ENCODE measurements at regions of chr17 and their contacts with region 1.

Region 1: DNA sequence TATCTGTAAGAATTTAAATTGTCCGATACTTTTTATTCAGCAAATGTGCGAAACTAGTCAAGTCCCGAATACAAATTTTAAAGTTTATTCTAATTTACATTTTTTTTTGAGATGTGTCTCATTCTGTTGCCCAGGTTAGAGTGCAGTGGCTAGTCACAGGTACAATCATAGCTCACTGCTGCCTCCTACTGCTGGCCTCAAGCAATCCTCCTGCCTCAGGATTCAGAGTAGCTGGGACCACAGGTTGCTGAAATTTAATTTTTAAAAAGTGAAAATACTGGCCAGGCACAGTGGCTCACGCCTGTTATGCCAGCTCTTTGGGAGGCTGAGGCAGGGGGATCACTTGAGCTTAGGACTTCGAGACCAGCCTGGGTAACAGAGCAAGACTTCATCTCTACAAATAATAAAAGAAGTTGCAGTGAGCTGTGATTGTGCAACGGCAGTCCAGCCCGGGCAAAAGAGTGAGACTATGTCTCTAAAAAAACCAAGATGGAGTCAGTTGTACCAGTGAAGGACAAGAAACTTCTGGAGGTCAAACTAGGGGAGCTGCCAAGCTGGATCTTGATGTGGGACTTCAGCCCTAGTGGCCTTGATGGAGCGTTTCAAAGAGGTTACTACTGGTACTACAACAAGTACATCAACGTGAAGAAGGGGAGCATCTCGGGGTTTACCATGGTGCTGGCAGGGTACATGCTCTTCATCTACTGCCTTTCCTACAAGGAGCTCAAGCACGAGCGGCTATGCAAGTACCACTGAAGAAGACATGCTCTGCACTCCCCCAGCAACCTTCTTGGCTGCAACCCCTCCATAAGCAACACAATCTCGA is 5.6 kb downstream of the POLG2 start:
- DNase-seq: peak in 8 of 9 experiments; percentile 27 to 71 (median 53)
- ATAC-seq: peak; percentile 76
- H3K4me3 ChIP-seq: no peak overlapping the region
- H3K4me3 Mint-ChIP-seq: no peak overlapping the region
- H3K27ac ChIP-seq: no peak overlapping the region
- H3K27ac Mint-ChIP-seq: no peak overlapping the region
- H3K4me1 ChIP-seq: peaks cover 15% of the 10 kb centered on the region
- H3K4me1 Mint-ChIP-seq: peaks cover 34% of the 10 kb centered on the region
- H3K27me3 ChIP-seq: no peaks in the 10 kb centered on the region
- H3K27me3 Mint-ChIP-seq: no peaks in the 10 kb centered on the region
- CTCF ChIP-seq: peak; percentile 74

Region 2: DNA sequence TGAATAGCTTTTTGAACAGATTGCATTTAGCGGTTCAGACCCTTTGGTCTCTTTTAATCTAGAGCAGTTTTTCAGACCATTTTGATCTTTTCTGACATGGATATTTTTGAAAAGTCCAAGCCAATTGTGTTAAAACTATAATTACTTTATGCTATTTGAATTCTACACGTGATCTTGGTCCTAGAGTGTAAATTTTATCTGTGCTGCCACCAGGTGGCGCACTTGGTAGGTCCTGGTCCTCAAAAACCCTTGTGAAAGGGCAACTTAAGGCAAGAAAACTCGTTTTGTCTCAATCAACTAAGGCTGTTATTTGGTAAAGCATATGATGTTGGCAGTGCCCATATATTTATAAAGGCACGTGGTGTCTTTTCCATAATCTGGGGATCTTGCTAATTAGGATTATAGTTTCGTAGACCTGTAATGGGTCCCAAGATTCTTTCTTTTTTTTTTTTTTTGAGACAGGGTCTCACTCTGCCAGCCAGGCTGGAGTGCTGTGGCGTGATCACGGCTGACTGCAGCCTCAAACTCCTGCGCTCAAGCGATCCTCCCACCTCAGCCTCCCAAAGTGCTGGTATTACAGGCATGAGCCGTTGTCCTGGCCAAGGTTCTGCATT is 184.3 kb before region 1 on chr17:
- CTCF ChIA-PET with region 1: no interaction called
- POLR2A ChIA-PET with region 1: no interaction called
- intact Hi-C with region 1: loop called in 1 of 2 experiments (anchors 5 kb)
- DNase-seq: peak; percentile 31 to 83 (median 71)
- ATAC-seq: peak; percentile 57
- H3K4me3 ChIP-seq: no peak overlapping the region
- H3K4me3 Mint-ChIP-seq: no peak overlapping the region
- H3K27ac ChIP-seq: no peak overlapping the region
- H3K27ac Mint-ChIP-seq: no peak overlapping the region
- H3K4me1 ChIP-seq: no peaks in the 10 kb centered on the region
- H3K4me1 Mint-ChIP-seq: peaks cover 2% of the 10 kb centered on the region
- H3K27me3 ChIP-seq: no peaks in the 10 kb centered on the region
- H3K27me3 Mint-ChIP-seq: peaks cover 2% of the 10 kb centered on the region
- CTCF ChIP-seq: peak; percentile 95

Region 3: GRCh38 chr17:64470625-64471024 is 20.6 kb before region 1 on chr17:
- CTCF ChIA-PET with region 1: interaction called, 13 read pairs
- POLR2A ChIA-PET with region 1: interaction called, 3 read pairs
- intact Hi-C with region 1: no loop called
- DNase-seq: no peak
- ATAC-seq: no peak
- H3K4me3 ChIP-seq: no peak overlapping the region
- H3K4me3 Mint-ChIP-seq: no peak overlapping the region
- H3K27ac ChIP-seq: no peak overlapping the region
- H3K27ac Mint-ChIP-seq: no peak overlapping the region
- H3K4me1 ChIP-seq: no peaks in the 10 kb centered on the region
- H3K4me1 Mint-ChIP-seq: no peaks in the 10 kb centered on the region
- H3K27me3 ChIP-seq: no peaks in the 10 kb centered on the region
- H3K27me3 Mint-ChIP-seq: no peaks in the 10 kb centered on the region
- CTCF ChIP-seq: no peak

Region 4: DNA sequence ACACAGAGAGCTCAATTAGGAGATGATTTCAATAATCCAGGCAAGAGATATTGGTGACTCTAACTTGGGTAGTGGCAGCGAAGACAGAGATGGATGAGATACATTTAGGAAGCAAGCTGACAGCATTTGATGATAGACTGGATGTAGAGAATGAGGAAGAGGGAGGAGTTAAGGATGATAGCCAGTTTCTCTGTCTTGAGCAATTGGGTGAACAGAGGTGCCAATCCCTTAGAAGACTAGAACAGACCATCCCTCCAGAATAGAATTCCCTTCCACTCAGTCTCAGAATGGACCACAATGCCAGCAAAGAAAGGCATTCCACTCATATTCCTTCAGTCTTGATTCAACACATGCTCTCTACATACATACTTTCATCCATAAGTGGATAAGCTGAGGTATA is 11.6 kb before region 1 on chr17:
- CTCF ChIA-PET with region 1: interaction called, 19 read pairs
- POLR2A ChIA-PET with region 1: interaction called, 3 read pairs
- intact Hi-C with region 1: no loop called
- DNase-seq: no peak
- ATAC-seq: no peak
- H3K4me3 ChIP-seq: no peak overlapping the region
- H3K4me3 Mint-ChIP-seq: no peak overlapping the region
- H3K27ac ChIP-seq: no peak overlapping the region
- H3K27ac Mint-ChIP-seq: peak overlapping the region; percentile 52
- H3K4me1 ChIP-seq: peaks cover 4% of the 10 kb centered on the region
- H3K4me1 Mint-ChIP-seq: peaks cover 7% of the 10 kb centered on the region
- H3K27me3 ChIP-seq: no peaks in the 10 kb centered on the region
- H3K27me3 Mint-ChIP-seq: no peaks in the 10 kb centered on the region
- CTCF ChIP-seq: no peak